ENCODE measurements at regions of chr7 and their contacts with region 1.

Region 1: DNA sequence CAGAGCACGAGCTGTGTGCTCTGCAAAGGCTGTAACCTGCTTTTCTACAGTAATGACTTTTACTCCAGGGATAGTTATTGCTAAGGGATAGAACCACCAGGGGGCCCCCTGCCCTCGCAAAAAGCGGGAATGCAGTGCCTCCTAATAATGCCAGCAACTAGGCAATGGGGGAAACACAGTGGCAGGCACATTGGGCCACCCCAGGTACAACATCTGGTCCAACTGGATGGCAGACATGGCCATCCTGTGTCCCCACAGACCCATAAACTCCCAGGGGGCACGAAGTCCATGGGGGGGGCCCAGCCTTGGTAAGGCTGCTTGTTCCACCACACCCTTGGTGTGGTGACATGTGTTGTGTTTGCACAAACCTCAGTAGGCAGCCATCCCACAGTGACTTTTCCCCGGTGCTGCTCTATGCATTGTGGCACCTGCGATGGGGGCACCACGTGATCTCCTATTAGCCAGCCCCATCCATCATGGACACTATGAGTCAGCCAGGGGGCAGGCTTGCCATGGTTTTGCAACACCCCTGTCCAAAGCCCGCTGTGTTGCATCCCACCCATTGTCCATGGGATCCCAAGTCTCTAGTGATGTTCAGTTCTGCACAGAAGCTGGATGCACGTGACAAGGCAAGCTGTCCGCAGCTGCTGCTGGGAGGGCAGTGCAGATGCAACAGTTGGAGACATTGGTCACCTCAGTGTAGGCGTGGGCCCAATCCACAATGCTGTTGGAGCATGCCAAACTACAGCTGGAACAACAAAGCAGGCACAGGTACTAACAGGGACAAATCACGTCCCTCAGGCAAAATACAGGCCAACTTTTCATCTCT is 84.0 kb downstream of the ANLN start:
- DNase-seq: peak; percentile 57
- H3K4me3 Mint-ChIP-seq: no peak overlapping the region
- H3K27ac Mint-ChIP-seq: no peak overlapping the region
- H3K4me1 Mint-ChIP-seq: peaks cover 15% of the 10 kb centered on the region
- H3K27me3 Mint-ChIP-seq: no peaks in the 10 kb centered on the region

Region 2: DNA sequence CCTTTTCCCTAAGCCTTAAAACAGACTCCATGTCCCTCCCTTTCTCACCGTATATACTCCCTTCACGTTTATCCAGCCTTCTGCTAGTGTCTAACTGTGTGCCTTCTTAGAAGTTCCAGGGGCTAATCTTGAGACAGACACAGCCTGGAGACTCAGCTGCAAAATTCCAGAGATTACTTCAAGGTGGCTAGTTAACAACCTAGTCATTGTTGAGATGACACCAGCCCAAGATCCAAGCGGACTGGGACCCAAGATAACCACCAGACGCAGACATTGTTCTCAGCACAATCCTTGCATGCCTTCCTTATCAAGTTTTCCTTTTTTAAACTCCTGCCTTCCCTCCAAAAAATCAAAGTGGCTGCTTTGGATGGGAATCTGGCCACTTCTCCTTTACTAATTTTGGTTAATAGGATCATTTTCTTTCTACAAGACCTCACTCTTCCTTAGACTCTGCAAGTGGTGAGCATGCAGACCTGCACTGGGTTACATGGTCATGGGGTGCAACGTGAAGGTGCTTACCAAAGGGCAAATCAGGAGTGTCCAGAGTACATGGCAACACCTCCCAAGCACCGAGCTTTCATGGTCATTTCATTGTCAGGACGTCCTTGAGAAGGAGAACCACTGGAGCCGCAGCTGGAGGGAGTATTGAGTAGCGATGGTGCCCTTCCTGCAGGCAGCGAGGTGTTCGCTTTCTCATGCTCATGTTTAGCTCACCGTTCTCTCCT is 14.3 kb before region 1 on chr7:
- CTCF ChIA-PET with region 1: no interaction called
- POLR2A ChIA-PET with region 1: no interaction called
- intact Hi-C with region 1: no loop called
- DNase-seq: no peak
- H3K4me3 Mint-ChIP-seq: no peak overlapping the region
- H3K27ac Mint-ChIP-seq: no peak overlapping the region
- H3K4me1 Mint-ChIP-seq: no peaks in the 10 kb centered on the region
- H3K27me3 Mint-ChIP-seq: no peaks in the 10 kb centered on the region

Region 3: GRCh38 chr7:36514289-36515243 is 40.9 kb after region 1 on chr7:
- CTCF ChIA-PET with region 1: no interaction called
- POLR2A ChIA-PET with region 1: no interaction called
- intact Hi-C with region 1: no loop called
- DNase-seq: no peak
- H3K4me3 Mint-ChIP-seq: no peak overlapping the region
- H3K27ac Mint-ChIP-seq: no peak overlapping the region
- H3K4me1 Mint-ChIP-seq: peaks cover 8% of the 10 kb centered on the region
- H3K27me3 Mint-ChIP-seq: no peaks in the 10 kb centered on the region

Region 4: DNA sequence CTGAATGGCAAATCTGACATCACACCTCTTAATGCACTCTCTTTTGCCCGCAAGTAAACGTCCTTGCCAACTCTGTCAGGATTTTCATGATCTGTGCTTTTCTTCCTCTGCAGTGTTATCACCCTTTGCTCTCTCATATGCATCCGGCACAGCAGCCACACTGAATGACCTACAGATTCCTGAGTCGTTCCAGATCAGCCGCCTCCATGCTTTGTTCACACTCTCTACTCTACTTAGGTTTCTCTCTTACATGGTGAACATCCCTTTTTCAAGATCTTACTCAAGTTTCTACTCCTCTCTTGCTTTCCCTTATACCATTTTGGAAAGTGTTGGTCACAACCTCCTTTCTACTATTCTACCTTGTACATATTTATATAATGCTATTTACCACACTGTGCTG is 378.3 kb after region 1 on chr7:
- CTCF ChIA-PET with region 1: no interaction called
- POLR2A ChIA-PET with region 1: no interaction called
- intact Hi-C with region 1: loop called (anchors 10 kb)
- DNase-seq: peak; percentile 40
- H3K4me3 Mint-ChIP-seq: no peak overlapping the region
- H3K27ac Mint-ChIP-seq: no peak overlapping the region
- H3K4me1 Mint-ChIP-seq: peaks cover 17% of the 10 kb centered on the region
- H3K27me3 Mint-ChIP-seq: no peaks in the 10 kb centered on the region

Region 5: DNA sequence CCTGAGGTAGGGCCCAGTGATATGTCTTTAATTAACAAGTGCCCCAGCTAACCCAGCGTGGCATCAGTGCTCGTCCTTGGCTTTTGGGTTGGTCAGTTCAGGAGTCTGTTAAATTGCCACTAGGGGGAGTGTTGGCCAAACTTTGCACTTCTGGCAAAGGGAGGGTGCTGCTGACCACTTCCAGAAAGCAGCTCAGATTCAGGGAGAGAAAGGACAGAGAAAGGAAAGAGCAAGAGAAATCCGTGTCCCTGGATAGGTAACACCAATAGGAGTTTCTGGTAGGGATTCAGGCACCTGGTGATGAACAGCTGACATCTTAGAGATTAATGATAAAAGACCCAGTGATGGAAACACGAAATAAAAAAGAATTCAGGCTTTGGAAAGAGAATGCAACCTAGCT is 493.7 kb after region 1 on chr7:
- CTCF ChIA-PET with region 1: no interaction called
- POLR2A ChIA-PET with region 1: no interaction called
- intact Hi-C with region 1: loop called (anchors 10 kb)
- DNase-seq: no peak
- H3K4me3 Mint-ChIP-seq: no peak overlapping the region
- H3K27ac Mint-ChIP-seq: no peak overlapping the region
- H3K4me1 Mint-ChIP-seq: peaks cover 53% of the 10 kb centered on the region
- H3K27me3 Mint-ChIP-seq: no peaks in the 10 kb centered on the region

Measured in activated CD4-positive, alpha-beta memory T cell treated with anti-CD3 and anti-CD28 coated beads for 36 hours (primary cell).